HCT116 (cell line): ENCODE measurements at regions of chr1 and their contacts with region 1.

Region 1: GRCh38 chr1:245079021-245079609 is 75.7 kb upstream of the KIF26B start:
- DNase-seq: peak; percentile 57
- ATAC-seq: 0 out of 2 replicates have a peak, but pooled peaks have one; percentile 53
- H3K4me3 ChIP-seq: no peak overlapping the region
- H3K27ac ChIP-seq: no peak overlapping the region
- H3K4me1 ChIP-seq: no peaks in the 10 kb centered on the region
- H3K27me3 ChIP-seq: no peaks in the 10 kb centered on the region
- CTCF ChIP-seq: peak; percentile 71 to 81 (median 78)
- POLR2A ChIP-seq: no peak
- RAD21 ChIP-seq: peak; percentile 89

Region 2: GRCh38 chr1:244796718-244797406 is 282.3 kb before region 1 on chr1:
- CTCF ChIA-PET with region 1: no interaction called
- POLR2A ChIA-PET with region 1: no interaction called
- RAD21 ChIA-PET with region 1: no interaction called
- intact Hi-C with region 1: no loop called
- DNase-seq: peak; percentile 35
- ATAC-seq: peak; percentile 68
- H3K4me3 ChIP-seq: no peak overlapping the region
- H3K27ac ChIP-seq: no peak overlapping the region
- H3K4me1 ChIP-seq: peaks cover 7 to 15% of the 10 kb centered on the region in 2 experiments; a peak in 3 of 4 replicates
- H3K27me3 ChIP-seq: no peaks in the 10 kb centered on the region
- CTCF ChIP-seq: peak; percentile 70 to 90 (median 85)
- POLR2A ChIP-seq: no peak
- RAD21 ChIP-seq: peak; percentile 94

Region 3: DNA sequence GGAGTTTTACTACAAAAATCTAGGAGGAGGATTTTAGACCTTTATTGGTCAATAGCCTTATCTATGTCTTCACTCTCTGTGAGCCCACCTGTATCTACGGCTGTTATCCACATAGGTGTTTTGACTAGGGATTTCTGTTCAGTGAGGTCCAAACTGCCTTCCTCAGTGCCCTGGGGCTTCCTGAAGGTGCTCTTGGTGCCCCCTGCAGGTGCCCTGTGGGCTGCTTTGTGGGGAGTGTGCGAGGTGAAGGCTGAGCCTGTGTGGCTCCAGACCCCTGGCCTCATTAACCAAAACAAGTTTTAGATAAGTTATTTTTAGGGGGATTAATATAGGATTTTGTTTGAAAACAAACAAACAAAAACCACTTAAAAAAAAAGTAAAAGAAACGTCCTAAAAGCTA is 198.2 kb after region 1 on chr1:
- CTCF ChIA-PET with region 1: no interaction called
- POLR2A ChIA-PET with region 1: no interaction called
- RAD21 ChIA-PET with region 1: no interaction called
- intact Hi-C with region 1: loop called (anchors 10 kb)
- DNase-seq: no peak
- ATAC-seq: peak; percentile 86
- H3K4me3 ChIP-seq: no peak overlapping the region
- H3K27ac ChIP-seq: no peak overlapping the region
- H3K4me1 ChIP-seq: no peaks in the 10 kb centered on the region
- H3K27me3 ChIP-seq: 0 out of 2 replicates have a peak, but pooled peaks cover 6% of the 10 kb centered on the region
- CTCF ChIP-seq: peak; percentile 47 to 60 (median 47); a peak in 5 of 6 replicates
- POLR2A ChIP-seq: no peak
- RAD21 ChIP-seq: peak; percentile 63

Region 4: DNA sequence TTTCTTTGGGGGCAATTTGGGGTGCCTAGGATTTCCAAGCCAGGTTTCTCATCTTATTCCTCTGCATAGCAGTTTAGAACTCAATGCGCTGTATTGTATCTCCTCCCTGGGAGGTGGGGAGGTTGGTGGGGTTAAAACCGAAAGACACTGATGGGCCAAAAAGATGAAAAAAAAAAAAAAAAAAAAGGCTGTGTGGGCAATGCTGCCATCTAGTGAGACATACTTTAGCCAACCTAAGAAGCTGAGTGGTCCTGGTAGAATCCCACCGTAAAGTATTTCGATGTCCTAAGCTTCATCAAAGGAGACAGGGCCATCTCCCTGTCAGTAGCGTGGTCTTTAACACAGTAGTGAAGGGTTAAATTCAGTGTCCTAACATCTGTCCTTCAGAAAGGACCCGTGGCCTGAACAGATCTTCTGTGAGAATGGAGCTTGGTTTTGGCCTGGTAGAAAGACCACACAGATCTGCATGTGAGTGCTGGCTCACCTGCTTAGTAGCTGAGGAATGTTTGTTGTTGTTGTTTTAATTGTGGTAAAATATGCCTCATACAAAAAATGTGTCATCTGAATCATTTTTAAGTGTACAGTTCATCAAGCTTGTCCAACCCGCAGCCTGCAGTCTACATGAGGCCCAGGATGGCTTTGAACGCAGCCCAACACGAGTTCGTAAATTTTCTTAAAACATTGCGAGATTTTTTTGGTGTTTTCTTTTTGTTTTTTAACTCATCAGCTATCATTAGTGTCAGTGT is 301.8 kb after region 1 on chr1:
- CTCF ChIA-PET with region 1: no interaction called
- POLR2A ChIA-PET with region 1: no interaction called
- RAD21 ChIA-PET with region 1: no interaction called
- intact Hi-C with region 1: loop called (anchors 2 kb)
- DNase-seq: peak; percentile 6
- ATAC-seq: no peak
- H3K4me3 ChIP-seq: no peak overlapping the region
- H3K27ac ChIP-seq: no peak overlapping the region
- H3K4me1 ChIP-seq: peaks cover 0 to 3% of the 10 kb centered on the region in 2 experiments; a peak in 1 of 4 replicates
- H3K27me3 ChIP-seq: peaks cover 21% of the 10 kb centered on the region
- CTCF ChIP-seq: peak; percentile 30 to 45 (median 43); a peak in 4 of 6 replicates
- POLR2A ChIP-seq: no peak
- RAD21 ChIP-seq: peak; percentile 59

Region 5: DNA sequence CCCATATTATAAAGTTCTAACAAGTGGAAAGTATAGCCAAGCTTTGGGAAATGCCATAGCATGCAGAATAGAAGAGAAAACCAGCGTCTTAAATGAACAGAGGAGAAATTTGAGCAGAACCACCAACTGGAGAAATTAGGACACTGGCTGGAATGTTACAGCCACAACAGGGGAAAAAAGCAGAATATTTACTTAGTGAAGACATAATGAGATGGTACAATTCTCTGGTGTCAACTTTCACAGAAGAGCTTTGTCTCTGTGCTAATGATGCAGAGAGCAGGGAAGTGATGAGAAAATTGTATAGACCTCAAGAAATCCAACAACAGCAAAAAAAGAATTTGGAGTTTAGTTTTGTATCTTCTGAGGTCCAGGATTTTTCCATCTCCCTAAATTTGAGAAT is 325.4 kb after region 1 on chr1:
- CTCF ChIA-PET with region 1: no interaction called
- POLR2A ChIA-PET with region 1: no interaction called
- RAD21 ChIA-PET with region 1: no interaction called
- intact Hi-C with region 1: no loop called
- DNase-seq: no peak
- ATAC-seq: no peak
- H3K4me3 ChIP-seq: no peak overlapping the region
- H3K27ac ChIP-seq: no peak overlapping the region
- H3K4me1 ChIP-seq: no peaks in the 10 kb centered on the region
- H3K27me3 ChIP-seq: peaks cover 21% of the 10 kb centered on the region
- CTCF ChIP-seq: no peak
- POLR2A ChIP-seq: no peak
- RAD21 ChIP-seq: no peak